K562 (cell line): ENCODE measurements at regions of chr5 and their contacts with region 1.

Region 1: DNA sequence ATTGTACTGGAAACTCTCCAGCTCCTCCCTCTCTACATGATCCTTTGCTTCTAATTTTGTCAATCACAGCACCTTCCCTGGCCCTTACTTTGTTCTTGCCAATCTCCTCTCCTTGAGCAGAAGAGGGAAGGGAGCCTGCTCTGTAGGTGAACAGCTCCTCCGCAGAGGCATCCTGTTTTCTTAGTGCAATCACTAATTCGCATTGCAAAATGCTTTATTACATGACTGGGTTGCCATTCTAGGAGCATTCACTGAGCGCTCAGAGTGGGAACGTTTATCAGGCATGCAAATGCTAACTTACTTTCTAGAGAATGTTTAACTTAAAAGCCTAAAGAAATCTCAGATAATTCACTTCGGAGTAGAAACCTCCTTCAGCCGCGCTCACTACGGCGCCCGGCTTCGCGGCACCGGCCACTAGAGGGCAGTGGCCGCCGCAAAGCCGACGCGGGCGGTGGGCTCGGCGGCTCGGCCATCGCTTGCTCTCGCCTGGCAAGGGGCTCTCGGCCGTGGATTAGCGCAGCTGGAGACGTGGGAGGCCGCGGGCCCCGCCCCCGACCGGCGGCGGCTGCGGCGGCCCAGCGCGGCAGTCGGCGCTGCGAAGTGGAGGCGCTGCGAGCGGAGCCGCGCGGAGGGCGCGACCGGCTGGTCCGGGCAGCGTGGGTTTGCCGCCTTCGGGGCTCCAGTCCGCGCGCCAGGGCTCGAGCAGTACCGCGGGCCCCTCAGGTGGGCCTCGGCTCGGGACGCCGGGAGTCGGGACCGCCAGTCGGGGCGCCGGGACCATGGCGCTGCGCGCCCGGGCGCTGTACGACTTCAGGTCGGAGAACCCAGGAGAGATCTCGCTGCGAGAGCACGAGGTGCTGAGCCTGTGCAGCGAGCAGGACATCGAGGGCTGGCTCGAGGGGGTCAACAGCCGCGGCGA is at the start of gene SNX18:
- DNase-seq: peak; percentile 90 to 92 (median 91)
- ATAC-seq: peak; percentile 96
- H3K4me3 ChIP-seq: peak within 1 kb of the TSS; percentile 78
- H3K27ac ChIP-seq: peak within 1 kb of the TSS; percentile 69
- H3K4me1 ChIP-seq: peaks cover 8 to 21% of the 10 kb centered on the region in 2 experiments; a peak in 4 of 5 replicates
- H3K27me3 ChIP-seq: no peaks in the 10 kb centered on the region
- CTCF ChIP-seq: peak; percentile 92 to 98 (median 97)
- EP300 ChIP-seq: peak; percentile 46; the same call in 1 of the 2 replicates
- POLR2A ChIP-seq: no peak
- RAD21 ChIP-seq: peak; percentile 98 to 100
- polyA plus RNA-seq, gene SNX18: 2.3 to 3.4 TPM

Region 2: GRCh38 chr5:54285686-54286085 is 231.7 kb before region 1 on chr5:
- CTCF ChIA-PET with region 1: no interaction called
- POLR2A ChIA-PET with region 1: no interaction called
- in situ Hi-C with region 1: no loop called
- intact Hi-C with region 1: no loop called
- DNase-seq: no peak
- ATAC-seq: peak; percentile 37
- H3K4me3 ChIP-seq: no peak overlapping the region
- H3K27ac ChIP-seq: no peak overlapping the region
- H3K4me1 ChIP-seq: peaks cover 0 to 4% of the 10 kb centered on the region in 2 experiments; a peak in 3 of 5 replicates
- H3K27me3 ChIP-seq: no peaks in the 10 kb centered on the region
- CTCF ChIP-seq: no peak
- EP300 ChIP-seq: no peak
- POLR2A ChIP-seq: no peak
- RAD21 ChIP-seq: no peak

Region 3: DNA sequence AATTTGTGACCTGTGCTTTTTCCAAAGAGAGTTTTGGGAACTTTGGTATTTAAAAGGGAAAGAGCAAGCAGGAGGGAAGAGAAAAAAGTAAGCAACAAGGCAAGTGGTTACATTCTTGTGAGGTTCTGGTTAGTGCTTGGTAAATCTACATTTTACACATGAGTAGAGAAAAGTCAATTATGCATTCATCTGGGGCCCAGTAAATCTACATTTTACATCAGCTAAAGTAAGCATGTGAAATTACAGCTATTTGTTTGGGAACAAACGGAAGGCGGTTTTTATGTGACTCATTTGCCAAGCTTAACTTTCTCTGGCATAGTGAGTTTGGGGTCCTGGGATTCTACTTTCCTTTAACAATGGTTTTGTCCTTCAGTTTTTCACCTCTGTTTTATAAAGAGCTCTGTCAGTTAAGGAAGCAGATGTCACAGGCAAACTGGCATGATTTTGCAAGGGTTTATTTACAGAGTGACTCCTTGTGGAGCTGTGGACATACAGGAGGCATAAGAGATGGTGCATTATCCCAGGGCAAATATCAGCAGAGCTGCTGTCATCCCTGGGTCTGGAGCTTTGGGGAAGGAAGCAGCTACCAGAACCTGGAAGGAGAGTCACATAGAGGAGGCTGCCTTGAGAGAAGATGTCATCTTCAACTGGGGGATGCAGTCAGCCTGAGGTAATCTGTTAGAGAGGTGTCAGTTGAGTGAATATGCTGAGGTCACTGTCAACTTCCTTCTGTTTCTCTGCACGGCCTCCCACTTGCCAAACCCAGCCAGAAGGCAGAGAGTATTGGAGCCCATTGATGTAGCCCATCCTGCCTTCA is 102.5 kb after region 1 on chr5:
- CTCF ChIA-PET with region 1: no interaction called
- POLR2A ChIA-PET with region 1: no interaction called
- in situ Hi-C with region 1: no loop called
- intact Hi-C with region 1: loop called (anchors 10 kb)
- DNase-seq: no peak
- ATAC-seq: no peak
- H3K4me3 ChIP-seq: no peak overlapping the region
- H3K27ac ChIP-seq: no peak overlapping the region
- H3K4me1 ChIP-seq: no peaks in the 10 kb centered on the region
- H3K27me3 ChIP-seq: peaks cover 0 to 13% of the 10 kb centered on the region in 2 experiments; a peak in 2 of 5 replicates
- CTCF ChIP-seq: no peak
- EP300 ChIP-seq: no peak
- POLR2A ChIP-seq: no peak
- RAD21 ChIP-seq: no peak

Region 4: DNA sequence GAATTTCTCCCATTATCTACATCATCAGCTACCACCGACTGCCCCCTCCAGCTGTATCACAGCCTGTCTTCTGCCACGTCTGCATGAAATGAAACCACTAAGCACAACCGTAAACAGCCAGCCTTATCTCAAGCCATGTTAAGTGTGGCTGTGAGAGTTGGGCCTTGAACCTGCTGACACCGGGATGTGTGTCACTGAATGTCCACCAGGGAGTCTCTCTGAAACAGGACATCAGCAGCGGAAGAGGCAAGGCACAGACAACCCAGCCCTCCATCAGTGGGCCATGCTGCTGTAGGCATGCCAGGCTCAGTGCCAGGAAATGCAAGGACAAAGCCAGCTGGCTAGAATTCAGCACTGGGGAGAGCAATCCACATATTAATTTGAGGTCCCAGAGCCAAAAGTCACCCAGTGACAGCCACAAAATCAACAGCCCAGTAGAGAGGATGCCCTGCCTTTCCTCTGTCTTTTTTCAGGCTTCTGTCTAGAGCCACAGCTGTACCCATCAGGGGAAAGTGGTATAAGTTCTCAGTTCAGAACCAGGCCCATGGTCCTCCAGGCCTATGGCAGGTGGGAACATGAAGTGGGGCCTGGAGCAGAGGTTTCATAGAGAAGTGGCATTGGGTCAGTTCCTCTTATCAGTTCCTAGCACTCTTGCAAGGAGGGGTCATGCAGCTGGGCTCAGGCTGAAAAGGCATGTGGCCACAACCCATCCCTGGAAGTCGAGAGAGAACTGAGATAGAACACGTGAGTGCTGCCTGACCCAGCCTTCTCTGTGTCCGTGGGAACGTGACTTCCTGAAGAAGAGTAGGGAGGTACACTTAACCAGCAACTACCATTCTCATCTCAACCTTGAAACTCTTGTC is 268.5 kb after region 1 on chr5:
- CTCF ChIA-PET with region 1: no interaction called
- POLR2A ChIA-PET with region 1: no interaction called
- in situ Hi-C with region 1: no loop called
- intact Hi-C with region 1: loop called (anchors 5 kb)
- DNase-seq: peak; percentile 46 to 85 (median 68)
- ATAC-seq: peak; percentile 99
- H3K4me3 ChIP-seq: no peak overlapping the region
- H3K27ac ChIP-seq: peak overlapping the region; percentile 7; the same call in 2 of the 3 replicates
- H3K4me1 ChIP-seq: peaks cover 9 to 16% of the 10 kb centered on the region in 2 experiments
- H3K27me3 ChIP-seq: no peaks in the 10 kb centered on the region
- CTCF ChIP-seq: peak; percentile 29 to 50 (median 31)
- EP300 ChIP-seq: peak; percentile 58
- POLR2A ChIP-seq: no peak
- RAD21 ChIP-seq: peak in 1 of 2 experiments; percentile 10; a peak in 2 of 4 replicates

Region 5: DNA sequence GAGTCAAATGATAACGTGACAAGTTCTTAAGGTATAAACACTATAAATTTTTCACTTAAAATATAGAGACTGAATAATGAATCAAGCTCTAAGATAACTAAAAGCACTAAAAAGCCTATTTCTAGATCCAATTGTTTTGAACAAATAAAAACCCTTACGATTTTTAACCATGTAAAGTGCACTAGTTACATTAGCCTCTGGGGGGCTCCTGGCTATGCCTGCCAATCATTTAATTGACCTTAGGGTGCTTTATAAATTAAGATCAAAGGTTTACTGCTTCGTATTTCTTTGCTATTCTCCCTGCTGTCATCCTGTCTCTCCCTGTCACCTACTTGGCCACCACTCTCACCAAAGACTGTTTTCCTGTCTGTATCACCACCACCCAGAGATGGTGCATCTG is 334.6 kb after region 1 on chr5:
- CTCF ChIA-PET with region 1: no interaction called
- POLR2A ChIA-PET with region 1: no interaction called
- in situ Hi-C with region 1: loop called (anchors 5 kb)
- intact Hi-C with region 1: no loop called
- DNase-seq: no peak
- ATAC-seq: no peak
- H3K4me3 ChIP-seq: no peak overlapping the region
- H3K27ac ChIP-seq: no peak overlapping the region
- H3K4me1 ChIP-seq: no peaks in the 10 kb centered on the region
- H3K27me3 ChIP-seq: peaks cover 2 to 7% of the 10 kb centered on the region in 2 experiments; a peak in 3 of 5 replicates
- CTCF ChIP-seq: 0 out of 6 replicates have a peak, but pooled peaks of 1 of the 3 experiments have one; percentile 21
- EP300 ChIP-seq: no peak
- POLR2A ChIP-seq: no peak
- RAD21 ChIP-seq: no peak

Region 6: DNA sequence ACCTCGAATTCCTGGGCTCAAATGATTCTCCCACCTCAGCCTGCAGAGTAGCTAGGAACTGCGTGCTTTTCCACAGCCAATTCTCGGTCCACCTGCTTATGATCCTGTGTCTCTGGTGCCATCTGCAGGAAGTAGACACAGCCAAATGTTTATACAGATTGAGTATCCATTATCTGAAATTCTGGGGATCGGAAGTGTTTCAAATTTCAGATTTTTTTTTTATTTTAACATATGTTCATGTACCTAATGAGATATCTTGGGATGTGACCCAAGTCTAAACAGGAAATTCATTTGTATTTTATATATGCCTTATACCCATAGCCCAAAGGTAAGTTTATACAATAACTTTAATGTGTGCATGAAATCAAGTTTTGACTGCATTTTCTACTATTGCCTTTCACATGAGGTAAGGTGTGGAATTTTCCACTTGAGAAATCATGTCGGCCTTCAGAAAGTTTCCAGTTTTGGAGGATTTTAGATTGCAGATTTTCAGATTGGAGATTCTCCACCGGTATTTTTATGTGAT is 378.4 kb after region 1 on chr5:
- CTCF ChIA-PET with region 1: interaction called, 13 read pairs
- POLR2A ChIA-PET with region 1: no interaction called
- in situ Hi-C with region 1: no loop called
- intact Hi-C with region 1: no loop called
- DNase-seq: peak in 1 of 4 experiments; percentile 47
- ATAC-seq: peak; percentile 70; the same call in 2 of the 3 replicates
- H3K4me3 ChIP-seq: no peak overlapping the region
- H3K27ac ChIP-seq: no peak overlapping the region
- H3K4me1 ChIP-seq: no peaks in the 10 kb centered on the region
- H3K27me3 ChIP-seq: peaks cover 0 to 4% of the 10 kb centered on the region in 2 experiments; a peak in 2 of 5 replicates
- CTCF ChIP-seq: peak; percentile 25 to 58 (median 40); a peak in 3 of 6 replicates
- EP300 ChIP-seq: no peak
- POLR2A ChIP-seq: no peak
- RAD21 ChIP-seq: peak; percentile 44 to 68; a peak in 3 of 4 replicates